Esophagus squamous epithelium (tissue), 5 donors: ENCODE measurements at regions of chr16 and their contacts with region 1.

Region 1: GRCh38 chr16:89708441-89708931 is 7.0 kb upstream of the SPATA2L start:
- DNase-seq: no peak
- H3K4me3 ChIP-seq: no peak overlapping the region
- H3K27ac ChIP-seq: no peak overlapping the region
- H3K4me1 ChIP-seq: peaks cover 7 to 39% (median 14%) of the 10 kb centered on the region in 3 donors
- H3K27me3 ChIP-seq: peaks cover 0 to 17% (median 0%) of the 10 kb centered on the region in 4 donors
- CTCF ChIP-seq: no peak
- POLR2A ChIP-seq: no peak

Region 2: DNA sequence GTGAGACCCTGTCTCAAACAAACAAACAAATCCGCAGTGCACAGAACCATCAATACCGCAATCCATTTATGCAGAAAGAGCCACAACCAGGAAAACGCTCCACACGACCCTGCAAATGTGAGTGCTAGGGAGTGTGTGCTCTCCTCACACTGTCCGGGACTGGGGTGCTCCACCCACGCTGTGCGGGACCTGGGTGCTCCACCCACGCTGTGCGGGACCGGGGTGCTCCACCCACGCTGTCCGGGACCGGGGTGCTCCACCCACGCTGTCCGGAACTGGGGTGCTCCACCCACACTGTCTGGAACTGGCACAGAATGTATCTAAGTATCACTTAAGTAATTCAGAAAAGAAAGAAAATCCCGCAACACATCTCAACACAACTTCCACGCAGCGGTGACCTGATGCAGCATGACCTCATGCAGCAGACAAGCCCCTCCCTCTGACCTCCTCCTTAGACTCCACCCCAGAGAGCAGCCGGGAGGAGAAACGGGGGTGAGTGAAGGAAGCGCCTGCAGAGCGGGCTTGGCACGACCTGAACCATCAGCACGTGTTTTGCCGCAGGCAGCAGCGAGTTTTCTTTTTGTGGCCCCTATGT is 51.4 kb after region 1 on chr16:
- intact Hi-C with region 1: loop called (anchors 5 kb)
- DNase-seq: no peak
- H3K4me3 ChIP-seq: no peak overlapping the region
- H3K27ac ChIP-seq: no peak overlapping the region
- H3K4me1 ChIP-seq: no peaks in the 10 kb centered on the region
- H3K27me3 ChIP-seq: no peaks in the 10 kb centered on the region
- CTCF ChIP-seq: no peak
- POLR2A ChIP-seq: no peak

Region 3: DNA sequence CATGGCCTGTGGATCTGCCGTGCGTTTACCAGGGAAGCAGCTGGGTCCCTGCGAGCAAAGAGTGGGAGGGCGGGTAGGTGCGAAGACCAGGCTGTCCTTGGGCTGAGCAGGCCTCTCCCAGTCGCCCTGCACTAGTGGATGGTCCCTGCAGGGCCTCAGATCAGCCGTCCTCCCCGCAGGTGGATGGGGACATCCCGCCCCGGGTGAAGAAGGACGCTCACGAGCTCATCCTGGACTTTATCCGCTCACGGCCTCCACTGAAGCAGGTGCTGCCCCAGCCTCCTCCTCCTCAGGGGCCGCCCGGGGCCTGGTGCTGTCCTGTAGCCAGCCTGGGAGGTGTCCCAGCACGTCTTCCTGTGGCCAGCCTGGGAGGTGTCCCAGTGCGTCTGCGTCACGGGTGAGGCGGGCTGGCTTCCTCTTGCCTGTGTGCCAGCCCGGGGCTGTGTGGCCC is 147.0 kb after region 1 on chr16:
- intact Hi-C with region 1: loop called (anchors 5 kb)
- DNase-seq: no peak
- H3K4me3 ChIP-seq: no peak overlapping the region
- H3K27ac ChIP-seq: no peak overlapping the region
- H3K4me1 ChIP-seq: peaks cover 0 to under 1% (median 0%) of the 10 kb centered on the region in 3 donors
- H3K27me3 ChIP-seq: no peaks in the 10 kb centered on the region
- CTCF ChIP-seq: no peak
- POLR2A ChIP-seq: no peak